CD4-positive, alpha-beta memory T cell (primary cell): ENCODE measurements at regions of chr9 and their contacts with region 1.

Region 1: DNA sequence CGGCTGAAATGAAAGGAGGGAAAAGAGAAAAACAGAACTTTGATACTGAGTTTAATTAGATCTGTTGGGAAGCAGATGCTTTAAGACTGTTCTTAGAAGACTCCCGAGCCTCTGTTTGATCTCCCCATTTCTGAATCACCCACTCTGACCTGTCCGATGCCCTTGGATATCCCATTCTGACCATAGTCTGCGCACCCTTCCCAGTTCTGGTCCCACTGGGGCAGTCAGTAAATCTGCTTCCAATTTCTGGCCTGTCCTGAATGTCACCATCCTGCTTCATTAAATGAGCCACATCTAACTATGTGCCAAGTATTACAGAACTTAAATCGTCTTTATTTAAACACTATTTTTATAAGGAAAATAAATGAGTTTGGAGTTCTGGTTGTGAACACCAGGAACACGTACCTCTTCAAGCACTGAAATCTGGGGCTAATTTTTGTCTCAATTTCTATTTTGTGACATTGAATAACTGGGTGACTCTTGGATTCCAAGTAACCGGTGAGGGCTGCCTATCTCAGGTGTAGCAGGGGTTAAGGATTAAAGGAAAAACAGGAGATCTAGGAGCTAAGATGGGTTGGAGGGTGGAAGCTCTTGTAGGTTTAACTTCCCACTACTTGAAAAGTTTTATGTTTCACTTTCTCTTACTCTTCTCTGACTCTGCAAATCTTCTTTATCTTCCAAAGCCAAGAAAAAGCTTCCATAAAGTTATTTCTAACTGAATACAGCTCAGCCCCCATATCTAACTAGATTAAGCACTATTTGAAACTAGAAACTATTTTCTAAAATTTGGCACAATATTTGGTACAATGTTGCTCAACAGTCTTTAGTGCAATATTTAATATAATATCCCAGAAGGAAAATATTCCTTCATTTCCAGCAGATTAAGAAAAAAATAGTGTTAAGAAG is 40.1 kb downstream of the ALDH1A1 start:
- DNase-seq: peak in 1 of 5 donors; percentile 31
- H3K4me3 ChIP-seq: no peak overlapping the region
- H3K4me3 Mint-ChIP-seq: peak overlapping the region in 1 of 8 donors; percentile 24
- H3K27ac ChIP-seq: no peak overlapping the region
- H3K27ac Mint-ChIP-seq: no peak overlapping the region
- H3K4me1 ChIP-seq: no peaks in the 10 kb centered on the region
- H3K4me1 Mint-ChIP-seq: no peaks in the 10 kb centered on the region
- H3K27me3 ChIP-seq: no peaks in the 10 kb centered on the region
- H3K27me3 Mint-ChIP-seq: peaks cover 1 to 2% of the 10 kb centered on the region in 2 donors

Region 2: DNA sequence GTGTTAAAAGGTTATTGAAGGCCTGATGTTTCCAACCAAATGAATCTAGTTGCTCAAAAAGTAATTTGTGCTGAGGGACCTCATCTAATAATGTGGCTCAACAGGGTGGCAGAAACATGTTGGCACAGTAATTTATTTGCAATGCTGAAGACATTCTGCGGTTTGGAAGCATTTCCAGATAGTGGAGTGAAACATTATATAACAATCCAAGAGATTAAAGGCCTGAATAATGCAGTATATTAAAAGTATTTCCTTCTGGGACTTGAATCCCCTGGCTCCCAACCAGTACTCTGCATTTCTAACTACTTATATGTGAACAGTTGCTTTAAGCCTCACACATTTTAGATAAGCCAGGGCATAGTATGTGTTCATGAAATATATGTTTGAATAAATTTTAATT is 66.0 kb after region 1 on chr9:
- CTCF ChIA-PET with region 1: no interaction called
- POLR2A ChIA-PET with region 1: no interaction called
- intact Hi-C with region 1: loop called (anchors 10 kb)
- DNase-seq: no peak
- H3K4me3 ChIP-seq: no peak overlapping the region
- H3K4me3 Mint-ChIP-seq: no peak overlapping the region
- H3K27ac ChIP-seq: no peak overlapping the region
- H3K27ac Mint-ChIP-seq: no peak overlapping the region
- H3K4me1 ChIP-seq: no peaks in the 10 kb centered on the region
- H3K4me1 Mint-ChIP-seq: no peaks in the 10 kb centered on the region
- H3K27me3 ChIP-seq: no peaks in the 10 kb centered on the region
- H3K27me3 Mint-ChIP-seq: peaks cover 2 to 3% of the 10 kb centered on the region in 2 donors